Activated CD4-positive, alpha-beta memory T cell treated with anti-CD3 and anti-CD28 coated beads, Interleukin-2, amount 10 ng/mL, durations not matched to agents 7 days and 5 days (primary cell): ENCODE measurements at regions of chr10 and their contacts with region 1.

Region 1: GRCh38 chr10:14588084-14588937 is 186.4 kb downstream of the FAM107B start:
- DNase-seq: peak; percentile 66
- H3K4me3 Mint-ChIP-seq: peak overlapping the region; percentile 47
- H3K27ac Mint-ChIP-seq: peak overlapping the region; percentile 96
- H3K4me1 Mint-ChIP-seq: peaks cover 93% of the 10 kb centered on the region
- H3K27me3 Mint-ChIP-seq: no peaks in the 10 kb centered on the region

Region 2: GRCh38 chr10:14553448-14553847 is 34.9 kb before region 1 on chr10:
- CTCF ChIA-PET with region 1: interaction called, 3 read pairs
- POLR2A ChIA-PET with region 1: interaction called, 10 read pairs
- DNase-seq: no peak
- H3K4me3 Mint-ChIP-seq: no peak overlapping the region
- H3K27ac Mint-ChIP-seq: peak overlapping the region; percentile 53
- H3K4me1 Mint-ChIP-seq: peaks cover 89% of the 10 kb centered on the region
- H3K27me3 Mint-ChIP-seq: no peaks in the 10 kb centered on the region

Region 3: DNA sequence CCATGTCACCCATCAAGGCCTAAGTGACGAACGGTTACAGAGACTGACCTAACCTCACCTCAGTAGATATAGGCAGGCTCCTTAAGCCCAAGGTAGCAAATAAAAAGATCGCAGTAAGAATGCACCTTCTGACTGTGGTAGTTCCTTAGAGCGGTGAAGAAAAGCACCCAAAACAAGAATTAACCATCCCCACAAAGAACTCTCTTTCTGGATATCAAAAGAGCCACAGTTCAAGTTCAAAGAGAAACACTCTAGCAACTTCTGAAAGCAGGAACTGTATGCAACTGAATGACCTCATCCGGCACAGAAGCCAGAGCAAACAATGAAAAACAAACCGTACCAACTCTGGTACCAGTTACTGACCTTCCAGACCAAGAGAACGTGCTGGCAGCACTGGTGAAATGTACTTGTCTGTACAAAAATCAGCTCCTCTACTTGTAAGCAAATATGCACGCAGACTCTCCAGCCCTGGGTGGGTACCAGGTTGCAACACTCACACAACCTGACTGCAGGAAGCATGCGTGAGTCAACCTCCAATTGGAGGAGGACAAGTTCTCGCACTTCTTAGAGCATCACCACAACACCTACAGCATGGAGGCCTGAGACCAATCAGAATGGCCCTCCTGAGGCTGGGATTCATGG is 16.3 kb before region 1 on chr10:
- CTCF ChIA-PET with region 1: interaction called, 5 read pairs
- POLR2A ChIA-PET with region 1: interaction called, 149 read pairs
- DNase-seq: peak; percentile 68
- H3K4me3 Mint-ChIP-seq: peak overlapping the region; percentile 77
- H3K27ac Mint-ChIP-seq: peak overlapping the region; percentile 89
- H3K4me1 Mint-ChIP-seq: peaks cover 95% of the 10 kb centered on the region
- H3K27me3 Mint-ChIP-seq: no peaks in the 10 kb centered on the region

Region 4: DNA sequence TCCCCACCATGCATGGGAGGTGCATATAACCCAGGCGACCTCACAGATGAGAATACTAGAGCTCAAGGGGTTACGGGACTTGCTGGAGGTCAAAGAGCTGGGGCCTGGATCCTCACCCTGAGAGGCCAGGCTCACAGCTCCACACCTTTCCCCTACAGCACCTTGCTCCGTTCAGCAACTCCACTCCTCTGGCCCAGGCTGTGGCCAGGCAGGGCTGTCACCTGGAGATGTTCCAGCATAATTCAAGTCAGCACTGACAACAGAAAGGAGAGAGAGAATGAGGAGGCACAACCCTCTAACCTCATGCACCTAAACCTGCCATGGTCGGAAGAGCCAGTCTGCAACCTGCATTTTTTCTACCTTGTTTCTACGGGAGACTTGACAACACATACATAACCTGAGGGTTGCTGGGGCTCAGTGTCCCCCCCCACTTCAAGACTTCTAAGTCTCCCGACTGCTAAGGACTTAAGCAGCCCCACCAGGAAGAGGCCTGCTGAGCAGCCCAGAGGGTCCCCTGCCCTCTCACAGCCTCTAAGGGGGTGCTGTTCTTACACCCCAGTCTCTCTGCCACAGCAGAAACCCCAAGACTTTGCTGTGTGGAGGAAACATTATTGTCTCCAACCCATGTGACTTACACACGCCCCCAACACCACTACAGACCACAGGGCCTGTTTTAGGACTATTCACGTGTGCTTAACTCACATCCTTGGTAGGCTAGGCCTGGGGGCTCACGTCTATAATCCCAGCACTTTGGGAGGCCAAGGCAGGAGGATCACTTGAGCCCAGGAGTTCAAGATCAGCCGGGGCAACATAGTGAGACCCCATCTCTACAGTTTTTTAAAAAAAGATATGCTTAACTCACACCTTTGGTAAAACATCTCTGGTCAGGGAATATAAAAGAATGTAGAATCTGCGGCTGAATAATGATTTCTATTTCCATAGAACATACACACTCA is 10.8 kb after region 1 on chr10:
- CTCF ChIA-PET with region 1: interaction called, 3 read pairs
- POLR2A ChIA-PET with region 1: interaction called, 42 read pairs
- DNase-seq: no peak
- H3K4me3 Mint-ChIP-seq: no peak overlapping the region
- H3K27ac Mint-ChIP-seq: peak overlapping the region; percentile 49
- H3K4me1 Mint-ChIP-seq: peaks cover 70% of the 10 kb centered on the region
- H3K27me3 Mint-ChIP-seq: no peaks in the 10 kb centered on the region

Region 5: DNA sequence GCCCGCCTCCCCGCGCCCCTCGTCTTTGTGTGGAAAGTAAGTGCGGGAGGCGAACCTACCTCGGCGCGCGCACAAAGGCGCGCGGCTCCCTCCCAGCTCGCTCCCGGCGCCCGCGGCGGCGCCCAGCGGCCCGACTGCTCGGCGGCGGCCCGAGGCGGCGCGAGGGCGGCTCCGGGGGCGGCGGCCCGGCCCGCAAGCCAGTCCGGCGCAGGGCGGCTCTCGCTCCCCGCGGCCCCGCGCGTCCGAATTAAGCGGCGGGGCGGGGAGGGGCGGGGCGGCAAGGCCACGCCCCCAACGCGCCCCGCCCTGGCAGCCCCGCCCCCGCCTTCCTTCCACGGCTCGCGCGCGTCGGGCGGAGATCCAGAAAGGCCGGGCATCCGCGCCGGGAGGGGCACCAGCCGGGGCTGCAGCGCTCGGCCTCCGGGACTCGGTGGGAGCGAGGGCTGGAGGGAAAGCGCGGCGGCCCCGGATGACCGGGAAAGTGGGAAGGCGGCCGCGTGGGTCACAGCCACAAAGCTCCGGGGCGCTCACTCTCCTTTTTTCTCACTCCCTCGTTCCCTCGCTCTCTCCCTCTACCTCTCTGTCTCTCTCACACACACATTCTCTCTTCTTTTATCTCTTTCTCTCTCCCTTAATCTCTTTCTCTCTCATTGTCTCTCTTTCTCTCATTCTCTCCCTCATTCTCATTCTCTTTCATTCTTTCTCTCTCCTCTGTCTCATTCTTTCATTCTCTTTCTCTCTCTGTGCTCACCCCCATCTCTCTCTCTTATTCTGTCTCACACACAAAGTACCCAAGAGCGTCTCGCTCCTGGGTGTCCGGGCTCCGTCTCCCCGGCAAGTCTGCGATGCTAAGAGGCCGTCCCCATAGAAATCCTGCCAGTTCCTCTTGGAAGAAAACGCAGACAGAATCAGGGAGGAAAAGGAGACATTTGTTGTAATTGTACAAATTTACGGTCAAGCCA is 16.2 kb after region 1 on chr10:
- CTCF ChIA-PET with region 1: interaction called, 3 read pairs
- POLR2A ChIA-PET with region 1: interaction called, 42 read pairs
- DNase-seq: peak; percentile 77
- H3K4me3 Mint-ChIP-seq: peak overlapping the region; percentile 94
- H3K27ac Mint-ChIP-seq: peak overlapping the region; percentile 89
- H3K4me1 Mint-ChIP-seq: peaks cover 58% of the 10 kb centered on the region
- H3K27me3 Mint-ChIP-seq: no peaks in the 10 kb centered on the region